Activated CD4-positive, alpha-beta T cell treated with anti-CD3 and anti-CD28 coated beads, Interleukin-2, amount 10 ng/mL, durations not matched to agents 7 days and 5 days (primary cell): ENCODE measurements at regions of chr1 and their contacts with region 1.

Region 1: DNA sequence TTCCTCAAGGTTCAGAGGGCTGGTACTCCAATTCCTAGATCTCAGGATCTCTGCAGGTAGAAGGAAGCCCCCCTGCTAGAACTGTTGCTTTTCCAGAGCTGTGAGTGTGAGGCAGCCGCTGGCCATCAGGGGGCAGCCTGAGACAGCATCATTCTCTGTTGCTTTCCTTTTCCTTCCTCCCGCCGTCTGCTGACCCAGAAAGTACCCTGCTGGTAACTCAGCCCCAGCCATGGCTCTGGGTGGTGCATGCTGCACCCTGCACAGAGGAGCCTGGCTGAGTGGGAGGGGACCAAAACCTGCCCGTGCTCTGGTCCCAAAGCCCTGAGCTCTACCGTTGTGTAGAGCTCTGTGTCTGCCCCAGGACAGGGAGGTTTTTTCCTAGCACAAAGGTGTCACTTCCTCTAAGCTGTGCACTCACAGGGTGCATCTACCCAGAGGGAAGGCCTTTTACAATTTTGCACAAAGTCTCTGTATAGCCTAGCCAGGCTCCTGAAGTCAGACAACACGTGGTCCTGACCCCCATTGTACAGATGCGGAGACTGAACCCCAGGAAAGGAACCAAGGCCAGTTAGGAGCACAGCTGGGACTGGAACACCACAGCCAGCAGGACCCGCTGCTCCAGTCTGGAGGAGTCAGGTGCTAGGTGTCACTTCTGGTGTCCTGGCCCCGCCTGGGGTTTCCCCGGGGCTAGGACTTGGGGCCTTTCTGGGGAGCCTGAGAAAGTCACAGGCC is 5.6 kb upstream of the FAM131C start:
- DNase-seq: peak; percentile 73
- H3K4me3 Mint-ChIP-seq: peak overlapping the region; percentile 65
- H3K27ac Mint-ChIP-seq: peak overlapping the region; percentile 86
- H3K4me1 Mint-ChIP-seq: peaks cover 9% of the 10 kb centered on the region
- H3K27me3 Mint-ChIP-seq: peaks cover 5% of the 10 kb centered on the region

Region 2: DNA sequence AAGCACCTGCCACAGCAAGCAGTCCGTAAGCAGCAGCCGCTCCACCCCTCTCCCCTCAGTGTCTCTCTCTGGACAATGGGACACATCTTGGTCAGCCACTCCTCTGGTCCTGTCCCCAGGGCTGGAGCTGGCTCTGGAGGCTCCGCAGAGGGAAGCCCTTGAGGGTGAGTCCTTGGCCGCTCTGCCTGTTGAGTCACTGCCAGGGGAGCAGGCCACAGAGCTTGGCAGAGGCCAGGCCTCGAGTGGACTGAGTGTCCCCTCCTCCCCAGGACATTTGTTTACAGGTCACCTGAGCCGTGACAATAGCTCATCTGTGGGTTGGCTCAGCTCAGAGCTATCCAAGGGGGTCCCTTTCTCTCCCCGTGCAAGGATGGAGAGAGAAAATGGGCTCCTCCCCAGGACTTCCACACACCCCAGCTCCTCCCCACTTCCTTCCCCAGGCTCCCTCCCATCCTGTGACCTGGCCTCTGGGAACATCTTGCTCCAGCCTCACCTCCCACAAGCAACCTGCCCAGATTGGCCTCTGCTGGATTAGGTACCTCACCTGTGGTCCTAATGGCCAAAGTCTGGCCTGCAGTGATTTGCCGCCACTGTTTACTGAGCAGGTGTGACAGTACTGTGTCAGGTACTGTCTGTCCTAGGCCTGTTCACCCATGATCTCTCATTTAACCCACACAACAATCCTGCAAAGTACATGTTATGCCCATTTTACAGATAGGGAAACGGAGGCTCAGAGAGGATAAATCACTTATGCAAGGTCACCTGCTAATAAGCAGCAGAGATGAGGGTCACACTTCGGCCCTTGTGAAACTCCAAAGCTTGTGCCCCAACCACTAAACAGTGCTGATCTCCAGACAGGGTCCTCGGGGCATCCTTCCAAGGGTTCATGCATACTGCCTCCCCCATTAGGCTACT is 10.5 kb before region 1 on chr1:
- CTCF ChIA-PET with region 1: interaction called, 10 read pairs
- POLR2A ChIA-PET with region 1: no interaction called
- DNase-seq: no peak
- H3K4me3 Mint-ChIP-seq: no peak overlapping the region
- H3K27ac Mint-ChIP-seq: no peak overlapping the region
- H3K4me1 Mint-ChIP-seq: peaks cover 48% of the 10 kb centered on the region
- H3K27me3 Mint-ChIP-seq: peaks cover 21% of the 10 kb centered on the region

Region 3: GRCh38 chr1:16187748-16188401 is 108.8 kb after region 1 on chr1:
- CTCF ChIA-PET with region 1: interaction called, 15 read pairs
- POLR2A ChIA-PET with region 1: no interaction called
- DNase-seq: peak; percentile 77
- H3K4me3 Mint-ChIP-seq: no peak overlapping the region
- H3K27ac Mint-ChIP-seq: no peak overlapping the region
- H3K4me1 Mint-ChIP-seq: peaks cover 4% of the 10 kb centered on the region
- H3K27me3 Mint-ChIP-seq: peaks cover 6% of the 10 kb centered on the region

Region 4: GRCh38 chr1:16217061-16217785 is 138.1 kb after region 1 on chr1:
- CTCF ChIA-PET with region 1: interaction called, 10 read pairs
- POLR2A ChIA-PET with region 1: no interaction called
- DNase-seq: peak; percentile 95
- H3K4me3 Mint-ChIP-seq: peak overlapping the region; percentile 80
- H3K27ac Mint-ChIP-seq: peak overlapping the region; percentile 66
- H3K4me1 Mint-ChIP-seq: peaks cover 39% of the 10 kb centered on the region
- H3K27me3 Mint-ChIP-seq: peaks cover 14% of the 10 kb centered on the region

Region 5: GRCh38 chr1:16243936-16244649 is 165.0 kb after region 1 on chr1:
- CTCF ChIA-PET with region 1: interaction called, 18 read pairs
- POLR2A ChIA-PET with region 1: no interaction called
- DNase-seq: peak; percentile 83
- H3K4me3 Mint-ChIP-seq: no peak overlapping the region
- H3K27ac Mint-ChIP-seq: peak overlapping the region; percentile 46
- H3K4me1 Mint-ChIP-seq: peaks cover 20% of the 10 kb centered on the region
- H3K27me3 Mint-ChIP-seq: no peaks in the 10 kb centered on the region

Region 6: DNA sequence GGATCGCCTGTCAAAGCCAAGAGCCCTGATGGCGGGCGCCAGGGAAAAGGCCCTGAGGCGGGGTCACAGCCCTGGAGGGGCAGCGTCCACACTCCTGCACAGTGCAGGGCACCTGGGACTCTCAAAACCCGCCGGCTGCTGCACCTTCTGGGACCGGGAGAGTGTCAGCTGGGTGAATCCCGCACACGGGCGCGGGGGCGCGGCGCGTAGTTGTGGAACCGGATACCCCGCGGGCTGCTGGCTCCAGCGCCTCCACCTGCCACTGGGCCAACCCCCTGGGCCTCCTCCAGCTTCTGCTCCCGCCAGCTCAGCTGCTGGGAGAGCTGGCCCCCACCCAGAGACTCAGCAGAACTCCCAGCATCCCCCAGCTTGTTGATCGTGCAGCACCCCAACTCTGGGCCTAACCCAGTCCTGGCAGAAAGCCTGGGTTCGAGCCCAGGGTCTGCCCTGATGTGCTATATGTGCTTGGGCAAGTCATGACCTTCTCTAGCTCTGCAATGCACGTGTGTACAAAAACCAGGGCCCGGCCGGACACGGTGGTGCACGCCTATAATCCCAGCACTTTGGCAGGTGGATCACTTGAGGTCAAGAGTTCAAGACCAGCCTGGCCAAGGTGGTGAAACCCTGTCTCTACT is 395.2 kb after region 1 on chr1:
- CTCF ChIA-PET with region 1: no interaction called
- POLR2A ChIA-PET with region 1: no interaction called
- DNase-seq: no peak
- H3K4me3 Mint-ChIP-seq: no peak overlapping the region
- H3K27ac Mint-ChIP-seq: no peak overlapping the region
- H3K4me1 Mint-ChIP-seq: no peaks in the 10 kb centered on the region
- H3K27me3 Mint-ChIP-seq: no peaks in the 10 kb centered on the region